MCF 10A (cell line): ENCODE measurements at regions of chr11 and their contacts with region 1.

Region 1: GRCh38 chr11:64341851-64342791 is 2.1 kb downstream of the CCDC88B start:
- DNase-seq: peak; percentile 90
- H3K4me3 Mint-ChIP-seq: peak overlapping the region; percentile 65
- H3K27ac Mint-ChIP-seq: peak overlapping the region; percentile 35
- H3K4me1 Mint-ChIP-seq: peaks cover 12% of the 10 kb centered on the region
- H3K27me3 Mint-ChIP-seq: no peaks in the 10 kb centered on the region
- CTCF ChIP-seq: peak; percentile 36

Region 2: GRCh38 chr11:63916837-63917691 is 425.1 kb before region 1 on chr11 and contains the start of gene RCOR2:
- CTCF ChIA-PET with region 1: no interaction called
- POLR2A ChIA-PET with region 1: no interaction called
- intact Hi-C with region 1: no loop called
- DNase-seq: peak; percentile 57
- H3K4me3 Mint-ChIP-seq: peak within 1 kb of the TSS; percentile 70
- H3K27ac Mint-ChIP-seq: no peak within 1 kb of the TSS
- H3K4me1 Mint-ChIP-seq: peaks cover 6% of the 10 kb centered on the region
- H3K27me3 Mint-ChIP-seq: no peaks in the 10 kb centered on the region
- CTCF ChIP-seq: no peak
- total RNA-seq, gene RCOR2: 0.15 TPM in 1 of 2 replicates, not detected in the other

Region 3: DNA sequence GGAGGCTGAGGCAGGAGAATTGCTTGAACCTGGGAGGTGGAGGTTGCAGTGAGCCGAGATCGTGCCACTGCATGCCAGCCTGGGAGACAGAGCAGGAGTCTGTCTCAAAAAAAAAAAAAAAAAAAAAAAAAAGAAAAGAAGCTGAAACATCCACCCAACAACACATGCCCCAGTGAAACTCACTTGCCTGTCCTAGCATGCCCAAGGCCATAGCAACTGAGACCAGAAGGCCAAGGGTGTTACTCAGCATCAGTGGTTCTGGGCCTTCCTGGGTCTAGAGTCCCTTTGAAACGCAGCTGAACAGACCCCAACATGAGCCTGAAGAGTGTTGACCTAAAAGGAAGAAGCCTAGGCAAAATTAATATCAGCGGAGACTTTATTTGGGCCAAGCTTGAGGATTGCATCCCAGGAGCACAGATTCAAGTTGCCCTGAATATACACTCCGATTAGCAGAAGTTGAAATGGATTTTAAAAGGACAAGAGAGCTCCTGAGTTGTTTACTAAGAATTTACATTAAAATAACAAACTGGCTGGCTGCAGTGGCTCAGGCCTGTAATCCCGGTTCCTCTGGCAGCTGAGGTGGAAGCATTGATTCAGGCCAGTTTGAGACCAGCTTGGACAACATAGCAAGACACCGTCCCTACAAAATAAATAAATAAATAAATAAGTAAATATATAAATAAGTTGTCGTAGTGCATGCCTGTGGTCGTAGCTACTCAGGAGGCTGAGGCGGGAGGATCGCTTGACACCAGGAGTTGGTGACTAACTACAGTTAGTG is 17.2 kb before region 1 on chr11:
- CTCF ChIA-PET with region 1: interaction called, 8 read pairs
- POLR2A ChIA-PET with region 1: interaction called, 285 read pairs
- intact Hi-C with region 1: no loop called
- DNase-seq: peak; percentile 90
- H3K4me3 Mint-ChIP-seq: peak overlapping the region; percentile 7
- H3K27ac Mint-ChIP-seq: peak overlapping the region; percentile 94
- H3K4me1 Mint-ChIP-seq: peaks cover 28% of the 10 kb centered on the region
- H3K27me3 Mint-ChIP-seq: no peaks in the 10 kb centered on the region
- CTCF ChIP-seq: no peak

Region 4: GRCh38 chr11:64331557-64332371 is 10.4 kb before region 1 on chr11:
- CTCF ChIA-PET with region 1: interaction called, 20 read pairs
- POLR2A ChIA-PET with region 1: interaction called, 25 read pairs
- intact Hi-C with region 1: no loop called
- DNase-seq: peak; percentile 98
- H3K4me3 Mint-ChIP-seq: peak overlapping the region; percentile 8
- H3K27ac Mint-ChIP-seq: peak overlapping the region; percentile 61
- H3K4me1 Mint-ChIP-seq: peaks cover 20% of the 10 kb centered on the region
- H3K27me3 Mint-ChIP-seq: no peaks in the 10 kb centered on the region
- CTCF ChIP-seq: peak; percentile 79